Ovary (tissue), 10 donors: ENCODE measurements at regions of chr12 and their contacts with region 1.

Region 1: DNA sequence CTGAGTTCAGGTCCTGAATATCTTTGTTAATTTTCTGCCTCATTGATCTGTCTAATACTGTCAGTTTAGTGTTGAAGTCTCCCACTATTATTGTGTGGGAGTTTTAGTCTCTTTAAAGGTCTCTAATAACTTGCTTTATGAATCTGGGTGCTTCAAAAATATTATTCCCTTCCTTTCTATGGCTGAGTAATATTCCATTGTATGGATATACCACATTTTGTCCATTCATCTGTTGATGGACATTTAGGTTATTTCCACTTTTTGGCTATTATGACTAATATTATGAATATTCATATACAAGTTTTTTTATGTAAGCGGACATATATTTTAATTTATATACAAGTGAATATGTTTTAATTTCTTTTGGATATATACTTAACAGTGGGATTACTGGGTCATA is 82.7 kb downstream of the SDR9C7 start:
- DNase-seq: no peak
- H3K4me3 ChIP-seq: no peak overlapping the region
- H3K27ac ChIP-seq: no peak overlapping the region
- H3K4me1 ChIP-seq: no peaks in the 10 kb centered on the region
- H3K27me3 ChIP-seq: no peaks in the 10 kb centered on the region
- CTCF ChIP-seq: no peak
- EP300 ChIP-seq: no peak
- POLR2A ChIP-seq: no peak

Region 2: DNA sequence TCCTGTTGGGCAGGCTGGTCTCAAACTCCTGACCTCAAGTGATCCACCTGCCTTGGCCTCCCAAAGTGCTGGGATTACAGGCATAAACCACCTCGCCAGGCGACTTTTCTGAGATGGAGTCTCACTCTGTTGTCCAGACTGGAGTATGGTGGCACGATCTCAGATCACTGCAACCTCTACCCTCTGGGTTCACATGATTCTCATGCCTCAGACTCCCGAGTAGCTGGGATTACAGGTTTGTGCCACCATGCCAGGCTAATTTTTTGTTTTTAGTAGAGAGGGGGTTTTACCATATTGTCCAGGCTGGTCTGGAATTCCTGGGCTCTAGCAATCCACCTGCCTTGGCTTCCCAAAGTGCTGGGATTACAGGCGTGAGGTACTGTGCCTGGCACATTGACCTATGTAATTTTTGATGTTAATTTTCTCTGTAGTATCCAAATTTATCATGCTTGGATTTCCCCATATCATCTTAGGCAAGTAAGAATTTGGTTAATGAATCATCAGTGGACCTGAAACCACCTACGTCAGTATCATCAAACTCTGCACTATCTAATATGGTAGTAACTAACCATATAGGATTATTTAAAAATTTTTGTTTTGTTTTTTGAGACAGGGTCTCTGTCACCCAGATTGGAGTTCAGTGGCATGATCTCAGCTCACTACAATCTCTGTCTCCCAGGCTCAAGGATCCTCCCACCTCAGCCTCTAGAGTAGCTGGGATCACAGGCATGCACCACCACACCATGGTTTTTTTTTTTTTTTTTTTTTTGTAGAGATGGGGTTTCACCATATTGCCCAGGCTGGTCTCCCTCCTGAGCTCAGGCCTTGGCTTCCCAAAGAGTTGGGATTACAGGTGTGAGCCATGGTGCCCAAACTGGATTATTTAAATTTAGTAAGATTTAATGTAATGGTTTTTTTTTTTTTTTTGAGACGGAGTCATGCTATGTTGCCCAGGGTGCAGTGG is 193.8 kb before region 1 on chr12:
- intact Hi-C with region 1: no loop called
- DNase-seq: no peak
- H3K4me3 ChIP-seq: no peak overlapping the region
- H3K27ac ChIP-seq: no peak overlapping the region
- H3K4me1 ChIP-seq: no peaks in the 10 kb centered on the region
- H3K27me3 ChIP-seq: no peaks in the 10 kb centered on the region
- CTCF ChIP-seq: no peak
- EP300 ChIP-seq: no peak
- POLR2A ChIP-seq: no peak

Region 3: DNA sequence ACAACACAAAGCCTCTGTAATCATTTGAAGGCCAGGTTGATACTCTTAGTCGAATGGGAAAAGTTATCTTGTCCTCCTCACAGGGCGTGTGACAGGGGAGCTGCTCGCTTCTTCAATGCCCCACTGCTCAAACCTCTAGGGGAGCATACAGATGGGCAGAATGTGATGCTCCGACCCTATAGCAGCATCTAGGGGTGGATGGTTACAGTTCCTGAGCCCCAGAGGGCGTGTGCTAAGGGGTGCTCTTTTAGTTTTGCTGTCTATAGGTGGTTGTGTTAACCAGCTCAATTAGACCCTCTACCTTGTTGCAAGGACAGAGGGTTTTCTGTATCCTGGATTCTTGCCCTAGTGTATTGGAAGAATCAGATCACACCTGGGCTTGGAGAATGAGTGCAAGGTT is 40.5 kb before region 1 on chr12:
- intact Hi-C with region 1: loop called in 1 of 4 experiments (anchors 5 kb)
- DNase-seq: no peak
- H3K4me3 ChIP-seq: no peak overlapping the region
- H3K27ac ChIP-seq: no peak overlapping the region
- H3K4me1 ChIP-seq: no peaks in the 10 kb centered on the region
- H3K27me3 ChIP-seq: no peaks in the 10 kb centered on the region
- CTCF ChIP-seq: no peak
- EP300 ChIP-seq: no peak
- POLR2A ChIP-seq: no peak

Region 4: GRCh38 chr12:57111031-57111734 is 259.7 kb after region 1 on chr12 and contains the start of gene STAT6:
- intact Hi-C with region 1: no loop called
- DNase-seq: peak; percentile 82 to 85 (median 84)
- H3K4me3 ChIP-seq: peak within 1 kb of the TSS; percentile 49
- H3K27ac ChIP-seq: peak within 1 kb of the TSS; percentile 61 to 99
- H3K4me1 ChIP-seq: peaks cover 2% of the 10 kb centered on the region
- H3K27me3 ChIP-seq: no peaks in the 10 kb centered on the region
- CTCF ChIP-seq: peak in 2 of 3 donors; percentile 50 to 59
- EP300 ChIP-seq: no peak
- POLR2A ChIP-seq: peak; percentile 73
- total RNA-seq, gene STAT6: 67.4 to 211 (median 168) TPM

Region 5: GRCh38 chr12:57517187-57517586 is 665.7 kb after region 1 on chr12:
- intact Hi-C with region 1: no loop called
- DNase-seq: no peak
- H3K4me3 ChIP-seq: no peak overlapping the region
- H3K27ac ChIP-seq: no peak overlapping the region
- H3K4me1 ChIP-seq: peaks cover 9% of the 10 kb centered on the region
- H3K27me3 ChIP-seq: no peaks in the 10 kb centered on the region
- CTCF ChIP-seq: no peak
- EP300 ChIP-seq: no peak
- POLR2A ChIP-seq: no peak